Heart right ventricle (tissue), 16 donors: ENCODE measurements at regions of chr17 and their contacts with region 1.

Region 1: DNA sequence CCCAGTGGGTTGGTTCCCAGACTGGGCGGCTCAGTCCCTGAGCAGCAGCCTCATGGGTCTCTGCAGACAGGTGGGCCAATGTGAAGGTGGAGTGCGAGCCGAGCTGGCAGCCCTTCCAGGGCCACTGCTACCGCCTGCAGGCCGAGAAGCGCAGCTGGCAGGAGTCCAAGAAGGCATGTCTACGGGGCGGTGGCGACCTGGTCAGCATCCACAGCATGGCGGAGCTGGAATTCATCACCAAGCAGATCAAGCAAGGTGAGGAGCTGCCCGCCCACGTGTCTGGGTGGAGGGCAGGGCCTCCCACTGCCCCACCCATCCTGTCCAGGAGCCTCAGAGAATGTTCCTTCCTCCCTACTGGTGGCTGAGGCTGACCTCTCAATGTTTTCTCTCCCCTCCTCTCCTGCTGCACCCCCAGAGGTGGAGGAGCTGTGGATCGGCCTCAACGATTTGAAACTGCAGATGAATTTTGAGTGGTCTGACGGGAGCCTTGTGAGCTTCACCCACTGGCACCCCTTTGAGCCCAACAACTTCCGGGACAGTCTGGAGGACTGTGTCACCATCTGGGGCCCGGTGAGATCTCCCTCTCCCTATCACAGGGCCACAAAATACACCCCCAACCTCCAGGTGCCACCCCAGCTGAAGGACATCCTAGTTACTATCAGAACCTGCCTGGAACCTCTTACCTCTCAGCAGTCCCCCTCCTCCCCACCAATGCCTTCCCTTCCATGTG is 44.3 kb downstream of the MRC2 start:
- DNase-seq: no peak
- ATAC-seq: peak in 5 of 8 donors; percentile 11 to 31 (median 24)
- H3K4me3 ChIP-seq: no peak overlapping the region
- H3K27ac ChIP-seq: no peak overlapping the region
- H3K4me1 ChIP-seq: peaks cover 0 to 17% (median 5%) of the 10 kb centered on the region in 9 donors
- H3K27me3 ChIP-seq: no peaks in the 10 kb centered on the region
- CTCF ChIP-seq: no peak

Region 2: GRCh38 chr17:62627219-62627910 is 44.4 kb before region 1 on chr17 and contains the start of gene MRC2:
- intact Hi-C with region 1: loop called in 1 of 10 experiments (anchors 5 kb)
- DNase-seq: peak; percentile 76 to 77
- ATAC-seq: peak; percentile 60 to 74 (median 68)
- H3K4me3 ChIP-seq: peak within 1 kb of the TSS; percentile 41 to 79 (median 64)
- H3K27ac ChIP-seq: peak within 1 kb of the TSS; percentile 48 to 94 (median 87)
- H3K4me1 ChIP-seq: peaks cover 0 to 40% (median 23%) of the 10 kb centered on the region in 9 donors
- H3K27me3 ChIP-seq: peaks cover 4 to 51% (median 29%) of the 10 kb centered on the region in 7 donors
- CTCF ChIP-seq: peak in 1 of 9 donors; percentile 5
- total RNA-seq, gene MRC2: 15.2 to 46.4 (median 21.4) TPM

Region 3: DNA sequence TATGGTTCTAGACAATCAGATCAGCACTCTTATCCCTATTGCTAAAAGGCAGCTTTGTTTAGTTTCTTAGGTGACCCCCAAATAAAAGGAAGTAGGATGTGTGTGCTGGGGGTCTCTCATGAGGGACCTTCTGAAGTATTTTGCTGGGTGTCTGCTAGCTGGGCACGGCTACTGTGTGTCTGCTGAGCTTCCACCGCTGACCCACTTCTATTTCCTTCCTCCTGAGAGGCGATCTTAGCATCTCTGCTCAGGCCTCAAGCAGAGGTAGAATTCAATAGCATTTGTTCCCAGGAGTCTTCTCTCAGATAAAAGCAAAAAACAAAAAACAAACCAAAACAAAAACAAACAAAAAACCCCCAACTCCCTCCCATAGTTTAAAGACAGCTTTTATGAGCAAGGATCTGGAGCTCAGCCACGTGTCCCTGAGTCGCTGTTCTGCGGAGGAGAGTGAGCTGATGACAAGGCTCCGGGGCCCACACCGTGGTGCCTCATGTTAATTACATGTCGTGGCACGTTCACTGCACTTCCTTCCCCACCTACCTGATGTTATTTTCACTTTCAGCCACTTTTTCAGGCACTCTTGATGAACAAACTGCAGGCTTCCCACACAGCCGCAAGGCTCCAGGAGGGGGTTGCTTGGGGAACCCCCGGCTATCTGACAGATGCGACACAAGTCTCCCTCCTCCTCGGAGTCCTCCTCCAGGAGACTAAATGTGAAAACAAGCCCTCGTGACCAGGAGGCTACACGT is 52.8 kb after region 1 on chr17:
- intact Hi-C with region 1: loop called in 1 of 10 experiments (anchors 5 kb)
- DNase-seq: no peak
- ATAC-seq: no peak
- H3K4me3 ChIP-seq: no peak overlapping the region
- H3K27ac ChIP-seq: peak overlapping the region in 2 of 10 donors; percentile 7 to 40
- H3K4me1 ChIP-seq: peaks cover 0 to 30% (median 12%) of the 10 kb centered on the region in 9 donors
- H3K27me3 ChIP-seq: peaks cover 0 to 12% (median 0%) of the 10 kb centered on the region in 7 donors
- CTCF ChIP-seq: no peak

Region 4: DNA sequence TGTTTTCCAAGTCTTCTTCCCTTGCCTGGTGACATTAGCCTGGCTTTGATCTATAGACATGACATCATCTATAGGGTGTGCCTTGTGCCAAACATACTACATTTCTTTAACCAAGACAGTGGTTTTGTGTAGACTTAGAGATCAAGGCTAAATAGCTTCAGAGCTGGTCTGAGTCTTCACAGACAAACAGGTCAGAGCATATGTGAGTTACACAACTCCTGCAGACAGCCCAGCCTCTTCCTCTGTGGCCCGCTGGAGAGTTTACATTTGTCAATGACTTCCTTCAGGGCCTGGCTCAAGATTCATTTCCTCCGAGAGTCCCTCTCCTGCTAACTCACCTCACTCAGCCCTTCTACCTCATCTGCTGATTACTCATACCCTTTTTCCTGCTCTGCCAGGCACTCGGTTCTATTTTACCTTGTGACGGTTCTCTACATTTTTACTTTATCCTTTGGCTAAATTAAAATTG is 221.2 kb after region 1 on chr17:
- intact Hi-C with region 1: no loop called
- DNase-seq: peak in 1 of 2 donors; percentile 38
- ATAC-seq: peak; percentile 73 to 94 (median 82)
- H3K4me3 ChIP-seq: no peak overlapping the region
- H3K27ac ChIP-seq: peak overlapping the region in 3 of 10 donors; percentile 18 to 65 (median 42)
- H3K4me1 ChIP-seq: peaks cover 0 to 34% (median 25%) of the 10 kb centered on the region in 9 donors
- H3K27me3 ChIP-seq: no peaks in the 10 kb centered on the region
- CTCF ChIP-seq: no peak